Activated B cell treated with CpG ODN at 0.5 μM for 24 hours (primary cell): ENCODE measurements at regions of chrX and their contacts with region 1.

Region 1: DNA sequence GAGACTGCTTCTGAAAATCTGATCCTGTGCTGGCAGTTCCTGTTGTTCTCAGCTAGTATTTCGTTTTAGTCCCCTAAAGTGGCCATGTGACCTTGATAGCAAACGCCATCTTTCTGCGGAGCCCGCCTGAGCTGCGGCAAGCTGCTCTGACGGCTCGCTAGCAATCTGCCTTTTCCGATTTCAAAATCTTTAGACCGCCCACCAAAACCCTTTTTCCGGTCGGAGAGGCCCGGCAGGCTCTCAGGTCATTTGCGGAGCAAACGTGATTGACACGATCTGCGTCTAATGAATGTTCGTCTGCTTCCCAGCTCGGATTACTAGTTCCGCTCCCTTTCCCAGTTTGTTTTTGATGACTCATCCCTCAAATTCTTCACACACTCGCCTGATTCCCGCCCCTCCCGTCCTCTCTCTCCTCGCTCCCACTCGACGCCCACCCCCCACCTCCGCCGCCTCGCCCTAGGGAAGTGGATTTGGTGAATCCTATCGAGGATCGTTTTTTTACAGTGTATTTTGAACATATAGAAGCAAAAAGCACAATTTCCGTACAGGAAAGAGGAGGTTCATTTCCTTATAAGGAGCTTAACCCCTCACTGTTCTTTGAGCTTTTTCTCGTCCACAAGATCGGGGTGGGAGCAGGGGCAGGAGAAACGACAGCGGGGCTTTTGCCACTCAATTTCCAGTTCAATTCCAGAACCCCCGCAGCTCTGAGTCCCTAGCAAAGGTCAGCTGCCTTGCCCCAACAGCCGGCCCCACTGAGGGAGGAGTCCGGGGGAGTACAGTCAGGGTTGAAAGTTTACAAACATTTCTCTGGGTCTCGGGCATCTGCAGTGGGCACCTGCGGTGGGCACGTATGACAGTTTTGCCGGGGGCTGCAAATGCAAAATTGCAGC is 37.5 kb downstream of the NLGN3 start:
- DNase-seq: peak; percentile 44
- ATAC-seq: peak; percentile 90
- H3K4me3 Mint-ChIP-seq: peak overlapping the region; percentile 93
- H3K27ac Mint-ChIP-seq: peak overlapping the region; percentile 99
- H3K4me1 Mint-ChIP-seq: peaks cover 16% of the 10 kb centered on the region
- H3K27me3 Mint-ChIP-seq: no peaks in the 10 kb centered on the region
- CTCF ChIP-seq: no peak

Region 2: DNA sequence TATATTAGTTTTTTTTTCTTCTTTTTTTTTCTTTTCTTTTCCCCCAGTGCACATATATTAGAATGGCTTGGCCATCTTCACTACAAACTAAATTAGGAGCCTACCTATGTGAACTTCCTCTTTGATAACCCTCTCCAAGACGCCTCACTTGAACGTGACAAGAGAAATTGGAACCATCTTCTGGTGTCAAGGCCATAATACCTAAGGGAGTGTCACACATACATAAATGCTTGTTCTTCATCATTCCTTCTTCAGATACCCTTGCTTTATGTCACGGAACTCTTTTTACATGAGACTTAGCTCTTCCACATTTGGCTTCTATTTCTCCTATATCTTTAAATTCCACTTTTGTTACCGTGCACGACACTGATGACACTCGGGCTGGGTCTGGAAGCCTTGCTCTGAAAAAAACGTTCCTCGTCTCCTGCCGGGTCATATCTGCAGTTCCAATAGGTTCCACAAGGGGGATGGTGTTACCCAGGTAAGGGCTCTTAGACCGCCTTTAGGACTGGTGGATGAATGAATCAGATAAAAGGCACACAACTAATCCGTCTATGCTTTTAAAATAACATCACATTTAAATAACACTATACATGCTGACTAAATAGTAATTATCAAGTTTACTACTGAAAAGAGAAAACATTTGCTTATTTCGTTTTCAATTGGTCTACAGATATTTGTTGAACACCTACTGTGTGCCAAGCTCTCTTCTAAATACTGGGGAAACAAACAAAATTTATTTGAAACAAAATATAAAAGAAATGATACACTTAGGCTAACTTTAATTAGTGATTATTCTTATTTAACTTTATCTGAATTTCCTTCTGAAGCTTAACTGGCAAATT is 985.0 kb before region 1 on chrX:
- CTCF ChIA-PET with region 1: no interaction called
- POLR2A ChIA-PET with region 1: no interaction called
- intact Hi-C with region 1: loop called (anchors 10 kb)
- DNase-seq: peak; percentile 14
- ATAC-seq: peak; percentile 79
- H3K4me3 Mint-ChIP-seq: peak overlapping the region; percentile 6
- H3K27ac Mint-ChIP-seq: no peak overlapping the region
- H3K4me1 Mint-ChIP-seq: peaks cover 4% of the 10 kb centered on the region
- H3K27me3 Mint-ChIP-seq: peaks cover 2% of the 10 kb centered on the region
- CTCF ChIP-seq: no peak

Region 3: GRCh38 chrX:70970482-70970995 is 211.6 kb before region 1 on chrX:
- CTCF ChIA-PET with region 1: interaction called, 6 read pairs
- POLR2A ChIA-PET with region 1: no interaction called
- intact Hi-C with region 1: loop called (anchors 1 kb)
- DNase-seq: no peak
- ATAC-seq: no peak
- H3K4me3 Mint-ChIP-seq: peak overlapping the region; percentile 28
- H3K27ac Mint-ChIP-seq: no peak overlapping the region
- H3K4me1 Mint-ChIP-seq: peaks cover 7% of the 10 kb centered on the region
- H3K27me3 Mint-ChIP-seq: no peaks in the 10 kb centered on the region
- CTCF ChIP-seq: no peak

Region 4: DNA sequence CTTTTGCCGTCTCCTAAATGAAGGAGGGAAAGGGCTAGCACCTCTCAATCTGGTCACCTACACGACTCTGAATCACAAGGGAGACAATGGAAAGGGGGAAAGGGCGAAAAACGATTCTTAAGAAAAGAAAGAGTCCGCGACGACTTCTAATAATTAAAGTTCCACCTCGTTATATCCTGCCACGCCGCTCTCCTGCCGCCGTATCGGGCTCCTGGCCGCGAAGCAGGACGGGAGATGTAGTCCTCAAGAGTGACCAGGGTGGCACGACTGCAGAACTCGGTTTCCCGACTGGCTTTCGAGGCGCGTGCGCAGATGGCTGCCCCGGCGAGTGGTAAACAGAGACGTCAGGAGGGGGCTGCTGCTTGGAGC is 86.6 kb before region 1 on chrX and contains the start of gene FOXO4:
- CTCF ChIA-PET with region 1: interaction called, 3 read pairs
- POLR2A ChIA-PET with region 1: interaction called, 5 read pairs
- intact Hi-C with region 1: loop called (anchors 1 kb)
- DNase-seq: peak; percentile 72
- ATAC-seq: peak; percentile 90
- H3K4me3 Mint-ChIP-seq: peak within 1 kb of the TSS; percentile 95
- H3K27ac Mint-ChIP-seq: peak within 1 kb of the TSS; percentile 93
- H3K4me1 Mint-ChIP-seq: peaks cover 26% of the 10 kb centered on the region
- H3K27me3 Mint-ChIP-seq: no peaks in the 10 kb centered on the region
- CTCF ChIP-seq: no peak
- total RNA-seq, gene FOXO4: 10.1 and 16.1 TPM in 2 replicates

Region 5: GRCh38 chrX:71128915-71129765 is 53.0 kb before region 1 on chrX:
- CTCF ChIA-PET with region 1: interaction called, 3 read pairs
- POLR2A ChIA-PET with region 1: interaction called, 6 read pairs
- intact Hi-C with region 1: loop called (anchors 1 kb)
- DNase-seq: peak; percentile 52
- ATAC-seq: peak; percentile 94
- H3K4me3 Mint-ChIP-seq: no peak overlapping the region
- H3K27ac Mint-ChIP-seq: peak overlapping the region; percentile 19
- H3K4me1 Mint-ChIP-seq: peaks cover 9% of the 10 kb centered on the region
- H3K27me3 Mint-ChIP-seq: no peaks in the 10 kb centered on the region
- CTCF ChIP-seq: no peak

Region 6: DNA sequence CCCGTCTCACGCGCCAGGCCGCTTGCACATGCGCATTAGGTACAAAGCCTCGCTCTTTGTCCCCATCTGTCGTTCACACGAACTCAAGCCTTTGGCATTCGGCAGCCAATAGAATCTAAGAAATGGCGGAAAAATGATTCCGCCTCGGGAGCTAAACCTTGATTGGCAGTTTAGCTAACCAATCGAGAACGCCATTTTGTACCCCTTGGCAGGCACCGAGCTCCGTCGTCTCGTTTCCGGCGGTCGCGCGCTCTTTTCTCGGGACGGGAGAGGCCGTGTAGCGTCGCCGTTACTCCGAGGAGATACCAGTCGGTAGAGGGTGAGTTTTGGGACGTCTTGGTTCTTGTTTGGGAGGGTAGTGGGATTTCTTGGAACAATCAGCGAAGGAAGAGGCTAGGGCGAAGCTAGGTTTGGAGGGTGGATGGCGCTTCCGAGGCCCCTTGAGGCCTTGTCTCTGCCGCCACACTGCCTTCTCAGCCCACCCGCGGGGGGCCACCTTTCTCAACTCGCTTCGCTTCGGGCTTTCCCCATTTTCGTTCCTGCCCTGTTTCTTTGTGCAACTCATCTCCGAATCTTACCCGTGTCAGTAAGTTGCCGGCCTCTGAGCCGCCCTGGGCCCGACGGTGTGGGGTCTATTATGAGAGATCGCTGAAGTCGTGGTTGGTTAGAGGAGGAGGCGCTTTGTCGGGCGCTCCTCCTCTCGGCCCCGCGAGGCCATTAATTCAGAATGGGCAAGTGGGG is 101.4 kb after region 1 on chrX and contains the start of gene NONO:
- CTCF ChIA-PET with region 1: interaction called, 4 read pairs
- POLR2A ChIA-PET with region 1: interaction called, 41 read pairs
- intact Hi-C with region 1: loop called (anchors 1 kb)
- DNase-seq: peak; percentile 53
- ATAC-seq: peak; percentile 87
- H3K4me3 Mint-ChIP-seq: peak within 1 kb of the TSS; percentile 99
- H3K27ac Mint-ChIP-seq: peak within 1 kb of the TSS; percentile 99
- H3K4me1 Mint-ChIP-seq: peaks cover 18% of the 10 kb centered on the region
- H3K27me3 Mint-ChIP-seq: no peaks in the 10 kb centered on the region
- CTCF ChIP-seq: no peak
- total RNA-seq, gene NONO: 398 and 462 TPM in 2 replicates